Cardiac septum (tissue), 1 donor: ENCODE measurements at regions of chr5 and their contacts with region 1.

Region 1: DNA sequence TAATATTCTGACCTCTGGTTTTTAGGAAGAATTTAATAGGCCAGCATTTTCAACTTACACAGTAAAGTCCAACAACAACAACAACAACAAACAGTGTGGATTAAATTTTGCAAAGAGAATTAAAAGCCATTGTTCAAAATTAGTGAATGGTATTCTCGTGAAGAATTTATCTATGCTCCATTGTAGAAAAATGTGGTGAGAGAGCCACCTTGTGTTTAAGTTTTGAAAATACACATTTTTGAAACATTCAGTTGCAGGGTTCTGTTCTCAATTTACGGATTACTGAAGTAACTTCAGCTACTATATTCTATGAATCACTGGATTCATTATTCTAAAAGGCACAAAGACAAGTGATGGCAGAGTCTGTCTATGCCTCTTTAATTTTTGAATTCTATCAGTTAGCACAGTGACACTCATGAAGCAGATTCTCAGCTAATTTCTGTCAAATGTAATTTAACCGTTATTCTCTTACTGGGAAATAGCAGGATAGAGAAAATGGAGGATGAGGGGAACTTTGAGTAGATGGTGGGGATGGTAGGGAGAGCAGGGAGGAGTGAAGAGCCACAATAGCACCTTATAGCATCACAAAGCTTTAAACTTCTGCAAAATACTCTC is 11.0 kb downstream of the CCDC152 start:
- DNase-seq: no peak

Region 2: GRCh38 chr5:41856644-41857491 is 910.7 kb before region 1 on chr5:
- intact Hi-C with region 1: loop called (anchors 10 kb)
- DNase-seq: no peak

Region 3: DNA sequence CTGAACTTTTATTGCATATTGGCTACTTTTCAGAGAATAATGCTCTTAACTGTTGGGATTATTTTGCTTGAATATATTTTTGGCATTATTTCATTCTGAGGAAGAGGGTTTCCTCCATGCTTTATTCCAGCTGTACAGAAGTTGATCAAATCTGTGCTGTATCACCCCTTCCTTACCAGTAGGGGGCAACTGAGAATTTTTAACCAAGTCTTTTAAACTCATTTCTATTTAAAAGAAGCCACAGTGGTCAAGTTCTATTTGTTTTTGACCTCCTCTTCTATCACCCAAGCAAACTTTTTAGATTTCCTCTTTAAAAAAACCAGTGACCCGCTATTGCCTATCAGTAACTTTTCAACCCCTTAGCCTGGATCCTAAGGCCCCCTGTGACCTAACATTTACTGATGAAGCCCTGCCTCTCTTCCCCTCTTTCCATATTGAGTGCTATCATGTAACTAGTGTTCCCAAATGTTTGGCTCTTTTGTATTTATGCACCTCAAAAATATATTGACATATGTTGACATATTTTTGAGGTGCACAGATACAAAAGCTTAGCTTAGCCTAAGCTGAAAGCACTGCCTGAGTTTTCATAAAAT is 761.9 kb before region 1 on chr5:
- intact Hi-C with region 1: loop called (anchors 5 kb)
- DNase-seq: no peak

Region 4: DNA sequence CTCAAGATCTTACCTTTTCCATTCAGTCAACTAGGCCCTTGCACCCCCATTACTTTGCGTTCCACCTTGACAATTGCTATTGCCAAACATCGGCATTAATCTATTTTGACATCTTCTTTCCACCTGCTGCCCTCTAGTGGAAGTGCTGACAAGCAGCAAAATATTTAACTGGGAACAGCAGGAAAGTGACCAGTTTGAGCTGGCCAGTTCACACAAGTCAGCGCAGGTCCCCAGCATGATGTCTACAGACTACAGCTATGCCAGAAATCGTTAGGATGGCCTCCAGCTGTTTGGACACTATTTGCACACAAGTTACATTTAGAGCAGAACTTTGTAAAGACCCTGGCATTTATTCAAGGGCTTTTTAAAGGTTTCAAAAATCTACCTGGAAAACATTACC is 184.3 kb before region 1 on chr5:
- intact Hi-C with region 1: loop called (anchors 10 kb)
- DNase-seq: no peak

Region 5: DNA sequence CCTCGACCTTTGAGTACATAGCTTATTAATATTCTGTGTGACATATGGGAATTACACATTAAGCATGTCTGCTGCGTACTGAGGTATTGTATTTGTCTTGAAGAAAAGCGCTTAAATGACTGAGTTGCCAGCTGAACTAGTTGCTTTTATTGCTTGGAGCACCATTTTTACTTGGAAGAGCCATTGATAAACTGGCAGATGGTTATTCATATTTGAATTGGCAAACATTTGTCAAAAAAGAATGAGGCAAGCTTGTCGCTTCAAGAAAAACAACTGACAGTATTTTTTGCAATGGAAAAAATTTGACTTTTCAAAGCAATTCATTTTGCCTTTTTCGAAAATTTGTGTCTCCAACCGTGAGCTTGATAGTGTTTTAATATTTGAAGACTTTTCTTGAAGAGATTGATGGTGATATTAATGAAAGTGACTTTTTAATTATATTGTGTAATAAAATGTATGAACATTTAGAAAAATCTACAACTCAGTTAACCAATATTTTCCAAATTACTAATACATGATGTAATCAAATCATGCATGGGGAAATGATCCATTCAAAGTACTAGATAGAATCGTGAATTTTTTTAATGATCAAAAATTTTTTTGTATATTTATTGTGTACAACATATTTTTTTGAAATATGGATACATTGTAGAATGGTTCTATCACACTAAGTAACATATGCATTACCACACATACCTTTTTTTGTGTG is 66.1 kb before region 1 on chr5:
- intact Hi-C with region 1: no loop called
- DNase-seq: no peak

Region 6: DNA sequence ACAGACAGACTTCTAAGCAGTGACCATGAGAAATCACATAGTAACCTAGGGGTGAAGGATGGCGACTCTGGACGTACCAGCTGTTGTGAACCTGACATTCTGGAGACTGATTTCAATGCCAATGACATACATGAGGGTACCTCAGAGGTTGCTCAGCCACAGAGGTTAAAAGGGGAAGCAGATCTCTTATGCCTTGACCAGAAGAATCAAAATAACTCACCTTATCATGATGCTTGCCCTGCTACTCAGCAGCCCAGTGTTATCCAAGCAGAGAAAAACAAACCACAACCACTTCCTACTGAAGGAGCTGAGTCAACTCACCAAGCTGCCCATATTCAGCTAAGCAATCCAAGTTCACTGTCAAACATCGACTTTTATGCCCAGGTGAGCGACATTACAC is 49.0 kb before region 1 on chr5:
- intact Hi-C with region 1: no loop called
- DNase-seq: no peak

Region 7: DNA sequence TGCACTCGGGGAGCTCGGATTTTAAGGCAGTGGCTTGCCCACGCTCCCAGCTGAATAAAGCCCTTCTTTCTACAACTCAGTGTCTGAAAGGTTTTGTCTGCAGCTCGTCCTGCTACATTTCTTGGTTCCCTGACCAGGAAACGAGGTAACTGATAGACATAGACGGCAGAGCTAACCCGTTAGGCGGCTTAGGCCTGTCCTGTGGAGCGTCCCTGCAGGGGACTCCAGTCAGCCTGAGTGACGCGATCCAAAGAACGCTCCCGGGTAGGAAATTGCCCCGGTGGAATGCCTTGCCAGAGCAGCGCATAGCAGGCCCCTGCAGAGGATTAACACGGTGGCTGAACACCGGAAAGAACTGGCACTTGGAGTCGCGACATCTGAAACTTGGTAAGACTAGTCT is 45.9 kb after region 1 on chr5:
- intact Hi-C with region 1: no loop called
- DNase-seq: no peak

Region 8: DNA sequence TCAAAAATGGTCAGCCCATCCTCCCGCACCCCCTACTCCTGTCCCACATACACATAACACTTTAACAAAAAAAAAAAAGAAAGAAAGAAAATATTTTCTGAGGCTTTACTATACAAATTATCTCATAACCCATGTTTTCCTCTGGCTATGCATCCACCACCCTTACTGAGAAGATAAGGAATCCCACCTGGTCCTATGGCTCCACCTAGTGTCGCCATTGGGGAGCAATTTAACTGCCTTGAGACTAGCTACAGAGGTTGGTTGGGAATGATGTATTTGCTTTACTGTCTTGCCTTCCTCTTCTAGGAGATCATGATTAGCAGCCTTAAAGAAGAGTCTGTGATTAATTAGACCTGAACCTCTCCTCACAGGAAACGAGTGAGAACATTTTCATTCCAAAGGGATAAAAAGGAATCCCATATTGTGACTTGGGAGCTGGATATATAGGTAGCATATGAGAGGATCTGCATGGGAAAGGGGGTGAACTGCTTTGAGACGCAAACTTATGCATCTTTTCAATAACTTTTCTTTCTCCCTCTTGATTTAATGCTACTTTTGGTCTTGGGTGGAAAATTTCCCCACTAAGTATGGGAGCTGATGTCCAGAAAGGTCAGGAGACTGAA is 121.8 kb after region 1 on chr5:
- intact Hi-C with region 1: loop called (anchors 10 kb)
- DNase-seq: peak; percentile 78